GM12878 (cell line): ENCODE measurements at regions of chr20 and their contacts with region 1.

Region 1: DNA sequence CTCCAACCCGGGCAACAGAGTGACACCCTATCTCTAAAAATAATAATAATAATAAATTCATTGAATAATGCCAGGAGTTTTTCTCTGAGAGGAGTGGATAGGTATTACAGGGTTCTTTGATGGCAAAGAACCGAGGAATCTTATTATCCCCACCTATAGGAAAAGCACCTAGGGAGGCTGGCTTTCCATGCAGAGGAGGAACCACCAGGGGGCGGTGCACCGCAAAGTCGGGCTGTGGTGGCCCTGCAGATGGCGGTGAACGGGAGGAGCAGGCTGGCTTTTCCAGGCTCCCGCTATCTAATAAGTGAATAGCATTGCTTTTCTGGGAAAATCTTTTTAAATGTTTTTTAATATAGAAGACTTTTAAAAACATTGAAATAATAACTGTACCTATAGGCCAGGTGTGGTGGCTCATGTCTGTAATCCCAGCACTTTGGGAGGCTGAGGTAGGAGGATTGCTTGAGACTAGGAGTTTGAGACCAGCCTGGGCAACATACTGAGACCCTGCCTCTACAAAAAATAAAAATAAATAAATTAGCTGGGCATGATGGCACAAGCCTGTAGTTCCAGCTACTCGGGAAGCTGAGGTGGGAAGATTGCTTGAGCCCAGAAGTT is 864.2 kb downstream of the KIF16B start:
- DNase-seq: no peak
- ATAC-seq: peak; percentile 94
- H3K4me3 ChIP-seq: no peak overlapping the region
- H3K27ac ChIP-seq: no peak overlapping the region
- H3K4me1 ChIP-seq: no peaks in the 10 kb centered on the region
- H3K27me3 ChIP-seq: no peaks in the 10 kb centered on the region
- CTCF ChIP-seq: peak; percentile 61 to 81 (median 75)
- EP300 ChIP-seq: no peak
- POLR2A ChIP-seq: no peak
- RAD21 ChIP-seq: peak; percentile 79

Region 2: DNA sequence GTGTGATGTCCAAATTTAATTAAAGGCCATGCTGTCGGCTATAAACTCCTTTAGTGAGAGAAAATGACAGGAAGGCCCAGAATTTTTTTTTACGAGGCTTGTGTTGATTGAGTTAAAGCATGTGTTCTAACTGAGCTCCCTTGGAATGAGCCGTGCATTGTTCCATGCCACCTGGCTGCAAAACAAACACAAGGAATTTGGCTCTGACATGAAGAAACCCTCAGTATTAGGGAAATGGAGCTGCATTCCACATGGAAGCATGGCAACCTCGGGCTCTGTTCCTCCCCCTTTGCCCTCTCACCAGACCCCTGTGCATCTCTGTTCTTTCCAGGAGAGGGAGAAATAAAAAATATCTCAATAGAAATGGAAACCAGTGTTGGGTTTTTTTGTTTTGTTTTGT is 71.1 kb before region 1 on chr20:
- CTCF ChIA-PET with region 1: no interaction called
- POLR2A ChIA-PET with region 1: no interaction called
- RAD21 ChIA-PET with region 1: no interaction called
- SMC1A ChIA-PET with region 1: no interaction called
- in situ Hi-C with region 1: no loop called
- intact Hi-C with region 1: no loop called
- DNase-seq: no peak
- ATAC-seq: no peak
- H3K4me3 ChIP-seq: no peak overlapping the region
- H3K27ac ChIP-seq: no peak overlapping the region
- H3K4me1 ChIP-seq: no peaks in the 10 kb centered on the region
- H3K27me3 ChIP-seq: no peaks in the 10 kb centered on the region
- CTCF ChIP-seq: no peak
- EP300 ChIP-seq: no peak
- POLR2A ChIP-seq: no peak
- RAD21 ChIP-seq: no peak

Region 3: DNA sequence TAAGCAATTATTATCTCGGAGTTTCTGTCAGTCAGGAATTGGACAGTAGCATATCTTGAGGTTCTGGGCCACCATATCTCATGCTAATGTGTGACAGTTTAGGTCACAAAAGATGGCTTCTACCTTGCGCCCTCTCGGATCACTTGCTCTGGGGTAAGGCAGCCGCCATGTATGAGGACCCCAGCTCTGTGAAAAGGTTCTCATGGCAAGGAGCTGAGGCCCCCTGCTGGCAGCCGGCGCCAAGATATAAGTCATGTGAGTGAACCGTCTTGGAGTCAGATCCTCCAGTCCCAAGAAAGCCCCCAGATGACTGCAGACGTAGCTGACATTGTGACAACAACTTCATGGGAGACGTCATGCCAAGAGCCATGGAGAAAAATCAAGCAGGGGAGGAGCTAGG is 193.4 kb after region 1 on chr20:
- CTCF ChIA-PET with region 1: interaction called, 24 read pairs
- POLR2A ChIA-PET with region 1: no interaction called
- RAD21 ChIA-PET with region 1: interaction called, 4 read pairs
- SMC1A ChIA-PET with region 1: interaction called, 5 read pairs
- in situ Hi-C with region 1: no loop called
- intact Hi-C with region 1: loop called (anchors 2 kb)
- DNase-seq: no peak
- ATAC-seq: peak; percentile 67
- H3K4me3 ChIP-seq: no peak overlapping the region
- H3K27ac ChIP-seq: no peak overlapping the region
- H3K4me1 ChIP-seq: no peaks in the 10 kb centered on the region
- H3K27me3 ChIP-seq: no peaks in the 10 kb centered on the region
- CTCF ChIP-seq: peak; percentile 19 to 54 (median 42); a peak in 5 of 6 replicates
- EP300 ChIP-seq: no peak
- POLR2A ChIP-seq: no peak
- RAD21 ChIP-seq: peak; percentile 44; the same call in 1 of the 2 replicates

Region 4: DNA sequence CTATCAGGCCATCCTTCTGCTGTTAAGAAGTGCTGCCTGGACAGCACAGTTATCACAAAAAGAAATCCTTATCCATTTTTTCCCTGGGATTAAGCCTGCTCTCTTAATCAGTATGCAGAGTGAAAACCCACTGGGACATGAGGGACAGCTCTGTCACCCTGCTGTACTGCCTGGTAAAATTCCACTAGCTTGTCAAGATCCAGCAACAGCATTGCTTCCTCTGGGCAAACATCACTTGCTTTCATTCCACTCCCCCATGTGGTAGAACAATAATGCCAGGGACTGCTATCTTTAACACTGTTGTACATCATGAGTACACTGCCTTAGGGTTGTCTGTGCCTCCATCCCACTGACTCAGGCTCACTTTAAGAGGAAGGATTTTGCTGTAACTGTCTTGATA is 532.8 kb after region 1 on chr20:
- CTCF ChIA-PET with region 1: interaction called, 6 read pairs
- POLR2A ChIA-PET with region 1: no interaction called
- RAD21 ChIA-PET with region 1: interaction called, 3 read pairs
- SMC1A ChIA-PET with region 1: interaction called, 4 read pairs
- in situ Hi-C with region 1: no loop called
- intact Hi-C with region 1: loop called (anchors 10 kb)
- DNase-seq: no peak
- ATAC-seq: peak; percentile 47; the same call in 2 of the 3 replicates
- H3K4me3 ChIP-seq: no peak overlapping the region
- H3K27ac ChIP-seq: no peak overlapping the region
- H3K4me1 ChIP-seq: no peaks in the 10 kb centered on the region
- H3K27me3 ChIP-seq: no peaks in the 10 kb centered on the region
- CTCF ChIP-seq: peak; percentile 14 to 54 (median 15); a peak in 2 of 6 replicates
- EP300 ChIP-seq: no peak
- POLR2A ChIP-seq: no peak
- RAD21 ChIP-seq: peak; percentile 37

Region 5: DNA sequence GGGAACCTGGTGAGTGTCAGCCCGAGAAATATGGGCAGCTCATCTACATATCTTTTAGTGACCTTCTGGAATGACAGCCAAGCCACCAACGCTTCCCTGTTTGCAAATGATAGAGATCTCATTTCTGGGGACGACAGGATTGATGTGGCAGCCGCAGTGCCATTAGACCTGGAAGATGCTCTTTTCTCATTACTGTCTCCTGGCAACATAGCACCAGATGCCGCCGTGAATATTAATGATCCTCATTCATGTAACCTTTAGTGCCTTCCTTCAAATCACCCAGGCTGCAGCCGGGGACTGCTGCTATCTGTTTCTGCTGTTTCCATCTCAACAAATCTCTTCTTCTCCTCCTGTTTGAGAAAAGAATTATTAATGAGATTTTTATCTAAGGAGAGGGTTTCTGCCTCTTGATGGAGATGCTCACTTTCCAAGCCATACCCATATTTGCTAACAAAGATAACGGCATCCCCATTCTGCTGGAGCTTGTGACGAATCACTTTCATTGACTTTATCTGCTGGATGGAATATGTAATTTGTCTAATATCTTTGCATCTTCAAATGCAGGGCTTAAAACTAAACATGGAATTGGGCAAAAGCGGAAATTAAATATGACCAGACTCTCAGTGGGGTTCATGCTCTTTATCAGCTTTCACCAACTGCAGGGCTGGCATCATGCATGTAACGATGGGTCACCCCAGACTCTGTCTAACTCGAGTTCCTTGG is 938.9 kb after region 1 on chr20:
- CTCF ChIA-PET with region 1: no interaction called
- POLR2A ChIA-PET with region 1: no interaction called
- RAD21 ChIA-PET with region 1: no interaction called
- SMC1A ChIA-PET with region 1: no interaction called
- in situ Hi-C with region 1: no loop called
- intact Hi-C with region 1: loop called (anchors 10 kb)
- DNase-seq: no peak
- ATAC-seq: no peak
- H3K4me3 ChIP-seq: no peak overlapping the region
- H3K27ac ChIP-seq: no peak overlapping the region
- H3K4me1 ChIP-seq: no peaks in the 10 kb centered on the region
- H3K27me3 ChIP-seq: no peaks in the 10 kb centered on the region; a peak in 3 of 4 replicates
- CTCF ChIP-seq: no peak
- EP300 ChIP-seq: no peak
- POLR2A ChIP-seq: no peak
- RAD21 ChIP-seq: no peak